HEK293 (cell line): ENCODE measurements at regions of chrX and their contacts with region 1.

Region 1: DNA sequence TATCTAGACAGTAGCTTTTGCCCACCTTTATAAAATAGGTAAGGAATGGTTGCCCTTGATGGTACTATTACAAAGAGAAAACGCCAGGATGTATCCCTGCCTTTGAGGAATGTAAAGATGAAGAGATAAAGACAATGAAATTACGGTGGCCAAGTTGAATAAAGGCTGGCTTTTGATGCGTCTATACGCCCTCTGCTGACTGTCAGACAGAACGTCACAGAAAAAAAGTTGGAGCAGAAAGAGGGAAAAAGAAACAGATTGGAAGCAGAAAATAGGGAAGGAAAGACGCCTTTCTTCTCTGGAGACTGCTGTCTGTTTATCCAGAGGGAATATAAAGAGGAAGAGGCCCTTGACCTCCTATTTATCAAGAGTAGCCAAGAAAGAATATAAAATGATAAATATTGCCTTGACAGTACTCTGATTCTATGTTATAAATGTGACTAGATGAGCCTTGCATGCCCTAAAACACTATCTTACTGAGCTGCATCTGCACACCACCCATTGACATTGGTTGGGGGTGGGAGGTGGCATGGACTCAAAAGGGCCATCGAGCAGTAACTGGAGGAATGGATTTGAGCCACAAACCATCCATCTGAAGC is 30.6 kb downstream of the PCDH19 start:
- H3K4me3 ChIP-seq: no peak overlapping the region
- H3K27ac ChIP-seq: no peak overlapping the region
- H3K4me1 ChIP-seq: no peaks in the 10 kb centered on the region
- CTCF ChIP-seq: peak; percentile 54

Region 2: DNA sequence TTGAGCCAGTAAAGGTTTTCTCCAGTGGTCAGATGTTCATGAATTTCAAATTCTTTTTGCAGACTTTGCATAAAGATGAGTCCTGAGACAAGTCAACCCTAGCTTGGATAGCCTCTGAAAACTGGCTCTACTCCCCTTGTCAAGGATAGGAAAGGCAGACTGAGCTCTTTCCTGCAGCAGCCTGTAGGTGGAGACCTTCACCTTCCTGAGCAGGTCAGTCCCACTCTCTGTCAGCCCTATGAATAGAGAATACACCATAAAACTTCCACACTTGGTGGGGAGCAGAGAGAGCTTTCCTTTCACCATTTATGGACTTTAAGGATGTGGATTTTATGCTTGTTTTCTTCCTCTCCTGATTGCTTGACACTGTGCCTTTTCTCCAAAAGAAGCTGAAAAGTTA is 11.3 kb before region 1 on chrX:
- CTCF ChIA-PET with region 1: interaction called, 20 read pairs
- POLR2A ChIA-PET with region 1: no interaction called
- H3K4me3 ChIP-seq: no peak overlapping the region
- H3K27ac ChIP-seq: no peak overlapping the region
- H3K4me1 ChIP-seq: no peaks in the 10 kb centered on the region
- CTCF ChIP-seq: peak; percentile 16; the same call in 1 of the 2 replicates

Region 3: GRCh38 chrX:100999451-100999850 is 620.0 kb after region 1 on chrX:
- CTCF ChIA-PET with region 1: no interaction called
- POLR2A ChIA-PET with region 1: no interaction called
- H3K4me3 ChIP-seq: no peak overlapping the region
- H3K27ac ChIP-seq: no peak overlapping the region
- H3K4me1 ChIP-seq: no peaks in the 10 kb centered on the region
- CTCF ChIP-seq: no peak